ENCODE measurements at regions of chrX and their contacts with region 1.

Region 1: DNA sequence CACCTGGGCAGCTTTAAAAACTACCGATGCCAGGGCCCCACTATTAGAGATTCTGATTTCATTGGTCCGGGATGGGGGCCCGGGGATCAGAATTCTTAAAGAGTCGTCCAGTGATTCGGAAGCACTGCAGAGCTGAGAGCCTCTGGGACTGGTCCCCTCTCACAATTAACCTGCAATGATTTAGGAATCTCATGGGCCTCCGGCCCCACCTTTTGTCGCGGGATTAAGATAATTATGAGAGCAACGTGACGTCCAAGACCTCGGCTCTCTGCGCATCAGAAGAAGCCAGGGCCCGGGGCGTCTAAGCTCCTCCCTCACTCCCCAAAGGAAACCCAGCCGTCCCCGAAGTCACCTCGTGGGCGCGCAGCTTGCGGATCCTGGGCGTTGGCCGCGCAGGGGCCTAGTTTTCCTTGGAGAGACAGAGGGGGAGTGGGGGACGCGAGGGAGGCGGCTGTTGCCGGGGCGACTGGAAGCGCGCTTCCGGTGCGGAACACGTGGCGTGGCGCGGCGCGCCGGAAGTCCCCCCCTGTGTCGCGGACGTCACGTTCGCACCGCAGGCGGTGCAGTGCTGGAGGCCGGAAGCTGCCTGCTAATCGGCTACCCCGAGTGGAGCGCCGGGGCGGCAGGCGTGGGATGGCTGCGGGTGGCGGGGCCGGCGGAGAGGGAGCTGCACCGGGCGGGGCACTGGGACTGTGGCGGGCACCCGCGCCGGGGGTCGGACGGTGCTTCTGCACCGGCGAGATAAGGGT is at the start of gene GEMIN8:
- DNase-seq: peak; percentile 82
- H3K4me3 Mint-ChIP-seq: peak within 1 kb of the TSS; percentile 98
- H3K27ac Mint-ChIP-seq: peak within 1 kb of the TSS; percentile 99
- H3K4me1 Mint-ChIP-seq: peaks cover 30% of the 10 kb centered on the region
- H3K27me3 Mint-ChIP-seq: no peaks in the 10 kb centered on the region
- total RNA-seq, gene GEMIN8: 4.7 to 5.1 TPM

Region 2: DNA sequence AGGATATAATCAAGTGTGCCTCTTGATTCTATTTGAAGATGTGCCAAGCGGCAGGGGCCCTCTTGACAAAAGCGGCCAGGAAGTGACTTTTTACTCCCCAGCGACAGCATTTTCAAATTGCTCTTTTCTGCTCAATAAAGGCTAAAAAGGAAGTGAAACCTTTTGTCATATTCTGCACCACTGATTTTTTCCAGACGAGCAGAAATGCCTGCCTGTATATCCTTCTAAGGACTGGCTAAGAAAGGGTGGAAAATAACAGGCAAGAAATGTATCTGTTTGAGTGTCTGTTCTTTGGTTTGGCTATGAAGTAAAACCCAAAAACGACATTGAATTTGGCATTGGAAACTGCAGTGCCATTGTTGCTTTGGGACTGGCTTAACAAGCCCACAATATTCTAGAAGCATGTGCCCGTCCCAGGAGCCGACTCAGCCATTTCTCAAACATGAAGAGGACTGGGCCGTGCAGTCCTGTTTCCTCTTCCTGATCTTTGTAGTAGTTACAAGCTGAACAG is 1029.2 kb before region 1 on chrX:
- CTCF ChIA-PET with region 1: interaction called, 4 read pairs
- intact Hi-C with region 1: loop called (anchors 5 kb)
- DNase-seq: peak; percentile 69
- H3K4me3 Mint-ChIP-seq: peak overlapping the region; percentile 65
- H3K27ac Mint-ChIP-seq: peak overlapping the region; percentile 92
- H3K4me1 Mint-ChIP-seq: peaks cover 67% of the 10 kb centered on the region
- H3K27me3 Mint-ChIP-seq: no peaks in the 10 kb centered on the region

Region 3: DNA sequence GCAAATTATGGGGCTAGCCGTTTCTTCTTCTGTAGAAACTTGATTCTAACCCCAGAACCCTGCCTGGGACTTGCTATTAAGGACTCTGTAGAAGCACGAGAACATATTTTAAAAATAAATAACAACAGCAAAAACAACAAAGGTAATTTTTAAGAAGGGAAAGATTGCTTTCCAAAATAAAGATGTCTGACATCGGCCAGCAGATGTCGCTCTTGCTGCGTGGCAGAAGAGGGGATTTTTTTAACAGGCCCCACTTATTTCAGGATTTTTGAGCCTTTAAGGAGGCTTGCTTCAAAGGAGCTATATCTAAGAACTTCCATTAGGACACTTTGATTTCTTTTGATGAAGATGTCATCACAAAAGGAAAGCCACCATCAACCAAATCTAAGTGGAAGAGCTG is 523.0 kb before region 1 on chrX:
- CTCF ChIA-PET with region 1: interaction called, 16 read pairs
- intact Hi-C with region 1: loop called (anchors 1 kb)
- DNase-seq: peak; percentile 61
- H3K4me3 Mint-ChIP-seq: no peak overlapping the region
- H3K27ac Mint-ChIP-seq: no peak overlapping the region
- H3K4me1 Mint-ChIP-seq: peaks cover 7% of the 10 kb centered on the region
- H3K27me3 Mint-ChIP-seq: no peaks in the 10 kb centered on the region

Region 4: GRCh38 chrX:13669246-13669737 is 360.3 kb before region 1 on chrX:
- CTCF ChIA-PET with region 1: no interaction called
- intact Hi-C with region 1: loop called (anchors 1 kb)
- DNase-seq: peak; percentile 82
- H3K4me3 Mint-ChIP-seq: peak overlapping the region; percentile 69
- H3K27ac Mint-ChIP-seq: peak overlapping the region; percentile 92
- H3K4me1 Mint-ChIP-seq: peaks cover 14% of the 10 kb centered on the region
- H3K27me3 Mint-ChIP-seq: no peaks in the 10 kb centered on the region

Region 5: GRCh38 chrX:13750204-13750603 is 279.4 kb before region 1 on chrX:
- CTCF ChIA-PET with region 1: interaction called, 10 read pairs
- intact Hi-C with region 1: loop called (anchors 1 kb)
- DNase-seq: no peak
- H3K4me3 Mint-ChIP-seq: no peak overlapping the region
- H3K27ac Mint-ChIP-seq: no peak overlapping the region
- H3K4me1 Mint-ChIP-seq: peaks cover 28% of the 10 kb centered on the region
- H3K27me3 Mint-ChIP-seq: no peaks in the 10 kb centered on the region

Region 6: DNA sequence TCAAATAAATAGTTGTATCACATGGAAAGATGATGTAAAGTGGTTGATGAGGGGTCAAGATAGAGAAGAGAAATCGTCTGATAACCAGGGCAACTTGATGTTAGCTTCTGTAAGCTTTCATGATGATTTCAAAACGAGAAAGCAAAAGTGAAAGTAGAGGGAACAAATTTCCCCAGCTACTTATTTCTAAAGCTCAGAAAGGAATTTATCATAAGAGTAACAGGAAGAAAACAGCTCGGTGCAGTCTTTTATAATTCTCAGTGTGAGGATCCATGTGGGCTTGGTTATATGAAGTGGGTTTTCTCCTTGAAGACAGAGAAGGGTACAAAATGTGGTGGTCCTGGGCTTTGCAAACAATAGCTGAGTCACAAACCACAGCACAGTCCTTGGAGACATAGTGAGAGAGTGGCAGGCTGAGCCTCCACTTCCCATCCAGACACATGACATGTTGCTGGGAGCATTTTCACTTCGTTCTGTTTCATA is 467.6 kb after region 1 on chrX:
- CTCF ChIA-PET with region 1: no interaction called
- intact Hi-C with region 1: loop called (anchors 10 kb)
- DNase-seq: peak; percentile 14
- H3K4me3 Mint-ChIP-seq: peak overlapping the region; percentile 71
- H3K27ac Mint-ChIP-seq: peak overlapping the region; percentile 91
- H3K4me1 Mint-ChIP-seq: peaks cover 16% of the 10 kb centered on the region
- H3K27me3 Mint-ChIP-seq: no peaks in the 10 kb centered on the region

Region 7: DNA sequence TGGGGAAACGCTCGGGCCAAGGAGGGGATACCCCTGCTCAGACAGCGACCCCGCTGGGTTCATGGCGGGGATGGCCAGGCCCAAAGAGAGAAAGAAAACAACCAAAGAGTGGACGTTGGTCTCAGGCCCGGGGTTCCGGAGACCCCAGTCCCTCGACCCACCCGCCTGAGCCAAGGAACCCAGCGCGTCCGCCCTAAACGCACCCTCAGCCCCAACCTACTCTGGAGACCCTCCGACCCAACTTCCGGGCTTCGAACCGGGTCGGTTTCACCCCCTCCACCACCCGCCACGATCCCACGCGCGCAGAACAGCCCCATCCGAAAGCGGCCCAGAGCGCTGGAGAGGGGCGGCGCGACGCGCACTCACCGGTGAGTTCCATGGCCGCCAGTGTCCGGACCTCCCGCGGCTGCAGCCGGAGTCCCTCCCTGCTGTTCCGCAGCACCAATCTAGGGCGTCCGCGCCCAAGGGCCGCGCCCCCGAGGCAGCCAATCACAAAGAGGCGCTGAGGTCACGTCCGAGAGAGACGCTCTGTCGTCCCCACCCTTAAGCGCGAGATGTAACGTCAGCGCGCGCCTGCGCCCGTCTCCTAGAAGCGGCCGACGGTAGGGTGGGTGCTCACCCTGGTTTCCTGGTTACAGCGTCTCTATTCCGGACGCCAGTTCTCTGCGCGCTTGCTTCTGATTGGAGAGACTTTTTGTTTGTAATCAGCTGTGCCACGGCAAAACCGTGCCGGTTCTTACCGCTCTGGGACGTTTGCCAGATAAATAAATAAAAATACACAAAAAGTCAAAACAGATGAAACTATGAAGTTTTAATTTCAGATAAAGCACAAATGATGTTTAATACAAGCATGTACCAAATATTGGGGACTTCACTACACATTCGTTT is 1305.8 kb after region 1 on chrX and contains the start of gene PIGA:
- CTCF ChIA-PET with region 1: no interaction called
- intact Hi-C with region 1: loop called (anchors 5 kb)
- DNase-seq: peak; percentile 94
- H3K4me3 Mint-ChIP-seq: peak within 1 kb of the TSS; percentile 89
- H3K27ac Mint-ChIP-seq: peak within 1 kb of the TSS; percentile 87
- H3K4me1 Mint-ChIP-seq: peaks cover 12% of the 10 kb centered on the region
- H3K27me3 Mint-ChIP-seq: no peaks in the 10 kb centered on the region
- total RNA-seq, gene PIGA: 26.8 to 28.4 TPM

Measured in activated naive CD4-positive, alpha-beta T cell treated with anti-CD3 and anti-CD28 coated beads for 36 hours (primary cell).